Caco-2 (cell line): ENCODE measurements at regions of chr15 and their contacts with region 1.

Region 1: GRCh38 chr15:99053511-99054387 is 46.2 kb upstream of the PGPEP1L start:
- DNase-seq: no peak
- H3K4me3 ChIP-seq: no peak overlapping the region
- H3K4me3 Mint-ChIP-seq: no peak overlapping the region
- H3K27ac Mint-ChIP-seq: no peak overlapping the region
- H3K4me1 ChIP-seq: no peaks in the 10 kb centered on the region
- H3K4me1 Mint-ChIP-seq: no peaks in the 10 kb centered on the region
- H3K27me3 ChIP-seq: no peaks in the 10 kb centered on the region
- H3K27me3 Mint-ChIP-seq: no peaks in the 10 kb centered on the region
- CTCF ChIP-seq: no peak

Region 2: DNA sequence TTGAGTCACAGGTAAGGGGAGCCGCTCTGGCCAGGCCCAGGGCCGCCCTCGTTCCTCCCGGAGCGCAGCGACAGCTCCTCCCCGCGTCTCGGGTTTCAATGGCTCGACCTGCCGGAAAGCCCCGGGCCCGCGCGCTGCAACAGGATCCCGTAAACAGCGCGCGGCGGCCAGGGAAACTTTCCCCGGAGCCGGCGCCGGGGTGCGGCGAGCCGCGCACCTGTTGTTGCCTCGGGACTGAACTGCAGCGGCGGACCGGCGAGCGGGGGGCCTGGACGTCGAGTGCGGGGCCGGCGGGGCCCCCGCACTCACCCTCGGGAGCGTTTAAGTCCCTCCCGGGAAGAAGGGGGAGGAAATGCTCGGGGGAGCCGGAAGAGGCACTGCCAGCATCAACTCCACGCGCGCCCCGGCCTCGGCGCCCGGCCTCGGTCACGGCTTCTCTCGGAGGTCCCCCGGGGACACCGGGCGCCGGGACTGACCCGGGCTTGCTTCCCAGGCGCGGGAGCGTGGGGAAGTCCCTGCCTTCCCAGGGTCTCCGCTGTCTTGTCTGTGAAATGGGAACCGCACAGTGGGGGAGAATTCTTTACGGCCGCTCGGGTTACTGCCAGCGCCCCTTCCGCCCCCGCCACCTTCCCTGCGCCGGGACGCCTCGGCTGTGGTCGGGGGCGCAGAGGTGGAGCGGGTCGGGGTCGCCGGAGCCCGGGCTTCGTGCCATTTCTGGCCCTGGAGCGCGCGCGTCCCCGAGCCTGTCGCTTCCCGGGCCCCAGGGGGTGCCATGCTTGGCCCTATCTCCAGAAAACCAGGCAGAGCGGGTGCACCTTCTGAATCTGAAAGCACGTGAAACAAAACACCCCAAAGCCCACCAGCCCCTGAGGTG is 38.7 kb before region 1 on chr15:
- CTCF ChIA-PET with region 1: no interaction called
- POLR2A ChIA-PET with region 1: no interaction called
- intact Hi-C with region 1: loop called (anchors 2 kb)
- DNase-seq: peak; percentile 73 to 82
- H3K4me3 ChIP-seq: peak overlapping the region; percentile 65
- H3K4me3 Mint-ChIP-seq: peak overlapping the region; percentile 64
- H3K27ac Mint-ChIP-seq: no peak overlapping the region
- H3K4me1 ChIP-seq: no peaks in the 10 kb centered on the region
- H3K4me1 Mint-ChIP-seq: peaks cover 7% of the 10 kb centered on the region
- H3K27me3 ChIP-seq: no peaks in the 10 kb centered on the region
- H3K27me3 Mint-ChIP-seq: peaks cover 4% of the 10 kb centered on the region
- CTCF ChIP-seq: no peak

Region 3: DNA sequence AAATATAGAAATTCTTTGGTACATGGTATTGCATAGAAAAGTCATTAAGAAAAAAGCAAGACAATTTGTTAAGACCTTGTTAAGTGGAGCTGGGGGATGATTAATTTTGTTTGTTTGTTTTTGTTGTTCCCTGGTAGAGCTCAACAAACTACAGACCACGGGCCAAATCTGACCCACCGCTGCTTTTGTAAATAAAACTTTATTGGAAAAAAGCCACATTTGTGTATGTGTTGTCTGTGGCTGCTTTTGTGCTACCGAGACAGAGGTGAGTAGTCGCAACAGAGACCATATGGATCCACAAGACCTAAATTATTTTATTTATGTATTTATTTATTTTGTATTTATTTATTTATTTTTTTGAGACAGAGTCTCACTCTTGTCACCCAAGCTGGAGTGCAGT is 22.9 kb before region 1 on chr15:
- CTCF ChIA-PET with region 1: no interaction called
- POLR2A ChIA-PET with region 1: no interaction called
- intact Hi-C with region 1: no loop called
- DNase-seq: no peak
- H3K4me3 ChIP-seq: no peak overlapping the region
- H3K4me3 Mint-ChIP-seq: no peak overlapping the region
- H3K27ac Mint-ChIP-seq: no peak overlapping the region
- H3K4me1 ChIP-seq: 0 out of 2 replicates have a peak, but pooled peaks cover 5% of the 10 kb centered on the region
- H3K4me1 Mint-ChIP-seq: peaks cover 5% of the 10 kb centered on the region
- H3K27me3 ChIP-seq: no peaks in the 10 kb centered on the region
- H3K27me3 Mint-ChIP-seq: peaks cover 13% of the 10 kb centered on the region
- CTCF ChIP-seq: no peak